Vagina (tissue), 2 donors: ENCODE measurements at regions of chr3 and their contacts with region 1.

Region 1: DNA sequence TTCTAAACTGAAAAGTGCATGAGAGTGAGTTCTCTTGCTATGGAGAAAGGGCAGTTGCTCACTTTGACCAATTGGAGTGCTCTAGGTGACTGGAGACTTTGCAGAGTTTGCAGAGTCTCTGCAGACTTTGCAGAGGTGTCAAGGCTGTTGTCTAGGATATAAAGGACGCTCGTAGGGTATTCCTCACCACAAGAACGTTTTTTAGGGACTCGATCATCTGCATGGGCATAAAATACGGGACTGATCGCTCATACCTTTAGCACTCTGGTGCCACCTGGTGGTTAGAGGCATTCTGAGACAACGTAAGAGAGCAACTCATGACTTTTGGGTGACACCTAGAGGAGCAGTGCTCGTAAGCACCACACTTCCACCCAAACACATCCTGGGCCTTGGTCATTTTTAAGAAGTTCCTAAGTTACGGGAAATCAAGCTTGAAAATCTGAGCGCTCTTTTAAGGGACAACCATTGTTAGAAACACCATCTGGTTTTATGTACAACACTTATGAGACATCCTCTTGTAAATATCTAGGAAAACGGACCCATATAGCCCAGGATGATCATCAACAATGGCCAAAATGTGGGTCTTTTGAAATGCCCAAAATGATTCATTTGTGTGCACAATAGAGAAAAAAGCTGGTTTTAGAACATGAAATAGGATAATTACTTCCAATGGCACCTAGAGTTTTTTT is 51.6 kb upstream of the XCR1 start:
- DNase-seq: peak; percentile 74 to 92
- H3K4me3 ChIP-seq: peak overlapping the region in 1 of 2 donors; percentile 4
- H3K27ac ChIP-seq: peak overlapping the region; percentile 51
- H3K4me1 ChIP-seq: peaks cover 36% of the 10 kb centered on the region
- H3K27me3 ChIP-seq: no peaks in the 10 kb centered on the region
- CTCF ChIP-seq: peak; percentile 96 to 99 (median 98)
- POLR2A ChIP-seq: no peak

Region 2: GRCh38 chr3:45890405-45890804 is 188.5 kb before region 1 on chr3:
- intact Hi-C with region 1: no loop called
- DNase-seq: no peak
- H3K4me3 ChIP-seq: no peak overlapping the region
- H3K27ac ChIP-seq: no peak overlapping the region
- H3K4me1 ChIP-seq: no peaks in the 10 kb centered on the region
- H3K27me3 ChIP-seq: no peaks in the 10 kb centered on the region
- CTCF ChIP-seq: no peak
- POLR2A ChIP-seq: no peak

Region 3: GRCh38 chr3:45938864-45939263 is 140.0 kb before region 1 on chr3:
- intact Hi-C with region 1: loop called (anchors 5 kb)
- DNase-seq: no peak
- H3K4me3 ChIP-seq: no peak overlapping the region
- H3K27ac ChIP-seq: peak overlapping the region; percentile 48
- H3K4me1 ChIP-seq: peaks cover 12% of the 10 kb centered on the region
- H3K27me3 ChIP-seq: no peaks in the 10 kb centered on the region
- CTCF ChIP-seq: peak; percentile 76 to 89 (median 89)
- POLR2A ChIP-seq: no peak